SK-N-SH (cell line): ENCODE measurements at regions of chr7 and their contacts with region 1.

Region 1: GRCh38 chr7:47266131-47266706 is 315.7 kb downstream of the TNS3 start:
- DNase-seq: peak; percentile 83
- H3K4me3 ChIP-seq: no peak overlapping the region; a peak in 1 of 4 replicates
- H3K27ac ChIP-seq: no peak overlapping the region
- H3K4me1 ChIP-seq: peaks cover 0 to 2% of the 10 kb centered on the region in 2 experiments; a peak in 1 of 4 replicates
- H3K27me3 ChIP-seq: no peaks in the 10 kb centered on the region
- CTCF ChIP-seq: peak; percentile 99
- EP300 ChIP-seq: no peak
- RAD21 ChIP-seq: peak; percentile 100

Region 2: DNA sequence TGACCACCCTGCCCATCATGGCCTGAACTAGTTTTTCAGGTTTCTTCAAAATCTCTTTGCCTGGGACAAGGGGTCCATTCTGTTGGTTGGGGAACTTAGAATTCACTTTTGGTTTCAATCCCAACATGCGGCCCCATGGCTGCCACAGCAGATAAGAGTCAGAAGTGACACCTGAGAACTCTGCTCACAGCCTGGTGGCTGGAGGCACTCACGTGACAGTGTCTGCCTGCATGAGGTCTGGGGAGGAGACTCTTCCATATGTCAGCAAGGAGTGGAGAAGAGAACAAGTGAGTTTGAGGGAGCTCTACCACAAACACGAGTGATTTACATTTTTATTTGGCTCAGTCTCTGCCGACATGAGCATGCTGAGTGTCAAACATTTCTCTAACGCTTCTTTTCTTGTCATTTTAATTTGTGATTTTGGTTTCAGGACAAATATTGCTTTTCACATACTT is 54.7 kb before region 1 on chr7:
- CTCF ChIA-PET with region 1: no interaction called
- POLR2A ChIA-PET with region 1: no interaction called
- DNase-seq: no peak
- H3K4me3 ChIP-seq: no peak overlapping the region
- H3K27ac ChIP-seq: no peak overlapping the region
- H3K4me1 ChIP-seq: no peaks in the 10 kb centered on the region
- H3K27me3 ChIP-seq: peaks cover 5% of the 10 kb centered on the region; the same call in 1 of the 2 replicates
- CTCF ChIP-seq: no peak
- EP300 ChIP-seq: no peak
- RAD21 ChIP-seq: no peak

Region 3: GRCh38 chr7:47293884-47294555 is 27.8 kb after region 1 on chr7:
- CTCF ChIA-PET with region 1: interaction called, 26 read pairs
- POLR2A ChIA-PET with region 1: no interaction called
- DNase-seq: no peak
- H3K4me3 ChIP-seq: no peak overlapping the region
- H3K27ac ChIP-seq: 0 out of 4 replicates have a peak overlapping the region, but pooled peaks of 1 of the 2 experiments have one; percentile 91
- H3K4me1 ChIP-seq: peaks cover 8 to 24% of the 10 kb centered on the region in 2 experiments
- H3K27me3 ChIP-seq: no peaks in the 10 kb centered on the region
- CTCF ChIP-seq: no peak
- EP300 ChIP-seq: no peak
- RAD21 ChIP-seq: no peak

Region 4: DNA sequence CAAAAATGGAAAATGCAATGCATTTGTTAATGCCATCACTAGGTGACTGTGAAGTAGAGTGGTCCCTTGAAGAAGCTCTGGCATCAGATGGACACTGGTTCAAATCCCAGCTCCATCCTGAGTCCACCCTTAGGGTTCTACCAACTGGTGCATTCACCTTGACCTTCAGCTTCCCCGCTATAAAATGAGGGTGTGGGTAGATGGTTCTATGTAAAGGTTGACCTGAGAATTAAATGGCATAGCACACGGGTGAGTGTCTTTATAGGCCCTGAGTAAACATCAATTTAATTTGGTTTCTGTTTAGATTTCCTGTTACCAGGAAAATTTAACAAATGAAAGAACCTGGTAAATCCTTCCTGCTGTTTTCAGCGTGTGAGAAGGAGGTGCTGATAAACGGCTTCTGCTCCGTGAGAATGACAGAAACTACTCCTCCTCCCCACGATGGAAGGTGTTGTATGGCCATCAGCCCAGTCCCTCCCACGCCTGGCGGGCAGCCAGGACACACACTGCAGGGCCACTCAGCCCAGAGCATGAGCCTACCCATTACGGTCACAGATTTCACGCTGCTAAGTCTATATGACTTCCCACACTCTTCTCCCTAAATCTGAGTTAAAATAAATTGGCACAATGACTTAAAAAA is 105.6 kb after region 1 on chr7:
- CTCF ChIA-PET with region 1: interaction called, 35 read pairs
- POLR2A ChIA-PET with region 1: no interaction called
- DNase-seq: peak; percentile 83
- H3K4me3 ChIP-seq: no peak overlapping the region
- H3K27ac ChIP-seq: no peak overlapping the region
- H3K4me1 ChIP-seq: peaks cover 7 to 28% of the 10 kb centered on the region in 2 experiments; a peak in 3 of 4 replicates
- H3K27me3 ChIP-seq: no peaks in the 10 kb centered on the region
- CTCF ChIP-seq: no peak
- EP300 ChIP-seq: no peak
- RAD21 ChIP-seq: no peak

Region 5: GRCh38 chr7:47453093-47454049 is 187.2 kb after region 1 on chr7:
- CTCF ChIA-PET with region 1: interaction called, 17 read pairs
- POLR2A ChIA-PET with region 1: no interaction called
- DNase-seq: no peak
- H3K4me3 ChIP-seq: 0 out of 4 replicates have a peak overlapping the region, but pooled peaks of 1 of the 2 experiments have one; percentile 0
- H3K27ac ChIP-seq: peak overlapping the region; percentile 78 to 89
- H3K4me1 ChIP-seq: peaks cover 39 to 47% of the 10 kb centered on the region in 2 experiments
- H3K27me3 ChIP-seq: no peaks in the 10 kb centered on the region
- CTCF ChIP-seq: no peak
- EP300 ChIP-seq: peak in 1 of 2 experiments; percentile 51; a peak in 1 of 4 replicates
- RAD21 ChIP-seq: no peak

Region 6: DNA sequence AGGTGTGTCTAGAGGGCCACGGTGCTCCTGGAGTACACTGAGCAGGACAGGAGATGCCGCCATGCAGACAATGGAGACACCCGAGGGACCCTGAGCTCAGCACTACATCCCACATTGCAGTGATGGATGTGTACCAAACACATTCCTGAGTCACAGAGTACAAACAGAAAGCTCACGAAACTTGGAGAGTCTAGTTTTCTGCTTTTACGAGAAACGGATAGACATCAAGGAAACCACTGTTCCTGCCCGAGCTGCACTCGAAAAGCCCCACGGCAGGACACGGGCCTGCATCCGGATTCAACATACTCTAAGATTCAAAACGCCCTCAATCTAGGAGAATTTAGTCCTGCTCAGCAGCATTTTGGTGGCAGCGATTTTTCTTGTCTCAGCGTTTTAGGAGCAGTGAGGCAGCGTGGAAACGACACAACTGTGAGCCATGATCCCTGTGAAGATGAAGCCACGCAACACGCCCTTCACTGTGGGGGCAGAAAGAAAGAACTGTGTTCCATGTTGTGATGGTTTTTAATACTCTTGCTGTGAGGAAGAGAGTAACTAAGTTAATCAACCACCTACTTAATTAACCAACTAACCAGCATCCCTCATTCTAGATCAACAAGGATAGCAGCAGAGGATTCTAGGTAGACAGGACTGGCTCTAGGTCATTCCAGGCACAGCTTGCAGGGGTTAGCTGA is 312.5 kb after region 1 on chr7:
- CTCF ChIA-PET with region 1: interaction called, 16 read pairs
- POLR2A ChIA-PET with region 1: no interaction called
- DNase-seq: no peak
- H3K4me3 ChIP-seq: no peak overlapping the region
- H3K27ac ChIP-seq: no peak overlapping the region
- H3K4me1 ChIP-seq: peaks cover 9 to 37% of the 10 kb centered on the region in 2 experiments; a peak in 3 of 4 replicates
- H3K27me3 ChIP-seq: no peaks in the 10 kb centered on the region
- CTCF ChIP-seq: no peak
- EP300 ChIP-seq: no peak
- RAD21 ChIP-seq: no peak

Region 7: GRCh38 chr7:47833211-47833610 is 567.0 kb after region 1 on chr7:
- CTCF ChIA-PET with region 1: interaction called, 275 read pairs
- POLR2A ChIA-PET with region 1: no interaction called
- DNase-seq: no peak
- H3K4me3 ChIP-seq: no peak overlapping the region
- H3K27ac ChIP-seq: no peak overlapping the region
- H3K4me1 ChIP-seq: no peaks in the 10 kb centered on the region
- H3K27me3 ChIP-seq: no peaks in the 10 kb centered on the region
- CTCF ChIP-seq: no peak
- EP300 ChIP-seq: no peak
- RAD21 ChIP-seq: no peak